CD4-positive, alpha-beta T cell (primary cell): ENCODE measurements at regions of chr15 and their contacts with region 1.

Region 1: GRCh38 chr15:36905908-36906307 is 194.4 kb downstream of the MEIS2 start:
- DNase-seq: no peak
- ATAC-seq: no peak
- H3K4me3 ChIP-seq: no peak overlapping the region
- H3K4me3 Mint-ChIP-seq: no peak overlapping the region
- H3K27ac ChIP-seq: no peak overlapping the region
- H3K27ac Mint-ChIP-seq: no peak overlapping the region
- H3K4me1 ChIP-seq: no peaks in the 10 kb centered on the region
- H3K4me1 Mint-ChIP-seq: no peaks in the 10 kb centered on the region
- H3K27me3 ChIP-seq: no peaks in the 10 kb centered on the region
- H3K27me3 Mint-ChIP-seq: peaks cover 15% of the 10 kb centered on the region
- CTCF ChIP-seq: no peak

Region 2: DNA sequence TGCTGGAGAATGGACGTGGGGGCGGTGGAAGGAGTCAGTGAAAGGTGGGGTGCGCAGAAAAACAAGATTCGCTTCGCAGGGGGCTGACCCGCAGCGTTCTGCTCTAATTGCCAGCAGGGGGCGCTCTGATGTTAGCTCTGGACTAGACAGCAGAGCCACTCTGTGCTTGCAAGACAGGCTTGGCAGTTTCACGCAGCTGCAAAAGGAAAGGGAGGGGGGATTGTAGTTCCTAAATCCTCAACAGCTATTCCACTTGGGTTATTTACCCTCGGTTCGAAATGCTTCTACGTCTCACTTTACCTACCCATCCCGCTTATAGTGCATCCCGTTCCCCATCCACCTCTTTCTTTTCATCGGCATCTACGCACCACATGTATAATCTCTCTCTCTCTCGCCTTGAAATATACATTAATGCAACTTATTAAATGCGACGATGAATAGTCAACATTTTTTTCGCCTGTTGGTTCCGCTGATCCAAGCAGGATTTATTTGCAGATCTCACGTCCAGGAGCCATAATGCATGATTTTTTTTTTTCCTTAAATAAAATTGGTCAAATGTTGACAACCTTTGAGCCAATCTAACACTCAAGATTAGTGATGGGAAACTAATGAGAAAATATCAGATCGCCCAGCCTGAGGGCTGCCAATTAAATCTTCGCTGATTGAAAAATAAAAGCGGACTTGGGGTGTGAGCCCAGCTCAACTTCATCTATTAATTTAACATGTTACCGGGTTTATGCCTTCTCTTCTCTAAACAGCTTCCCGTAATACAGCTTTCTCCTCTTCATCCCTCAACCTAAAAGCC is 22.0 kb before region 1 on chr15:
- CTCF ChIA-PET with region 1: no interaction called
- POLR2A ChIA-PET with region 1: no interaction called
- intact Hi-C with region 1: loop called in 1 of 2 experiments (anchors 1 kb)
- DNase-seq: peak in 11 of 14 experiments; percentile 5 to 62 (median 28)
- ATAC-seq: no peak
- H3K4me3 ChIP-seq: no peak overlapping the region
- H3K4me3 Mint-ChIP-seq: no peak overlapping the region
- H3K27ac ChIP-seq: no peak overlapping the region
- H3K27ac Mint-ChIP-seq: no peak overlapping the region
- H3K4me1 ChIP-seq: peaks cover 4% of the 10 kb centered on the region
- H3K4me1 Mint-ChIP-seq: peaks cover 13% of the 10 kb centered on the region
- H3K27me3 ChIP-seq: peaks cover 84 to 99% of the 10 kb centered on the region in 2 experiments
- H3K27me3 Mint-ChIP-seq: peaks cover 96% of the 10 kb centered on the region
- CTCF ChIP-seq: no peak

Region 3: DNA sequence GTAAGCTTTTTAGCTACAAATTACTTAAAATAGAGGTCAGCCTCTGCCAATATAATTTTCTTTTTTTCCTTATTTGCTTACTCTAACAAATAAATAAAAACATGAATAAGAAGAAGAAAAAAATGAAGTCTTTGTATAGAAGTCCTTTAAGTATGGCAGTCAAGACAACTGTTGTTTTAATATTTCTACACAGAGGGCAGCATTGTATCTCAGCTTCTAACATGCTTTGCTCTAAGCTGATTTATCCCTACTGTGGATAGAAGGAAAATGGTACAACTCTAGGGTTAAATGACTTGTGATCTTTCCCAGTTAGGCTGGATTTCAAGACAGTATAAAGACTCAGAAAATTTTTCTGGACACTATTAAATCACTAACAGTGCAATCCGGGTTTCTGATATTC is 298.8 kb after region 1 on chr15:
- CTCF ChIA-PET with region 1: no interaction called
- POLR2A ChIA-PET with region 1: no interaction called
- intact Hi-C with region 1: no loop called
- DNase-seq: no peak
- ATAC-seq: no peak
- H3K4me3 ChIP-seq: no peak overlapping the region
- H3K4me3 Mint-ChIP-seq: no peak overlapping the region
- H3K27ac ChIP-seq: no peak overlapping the region
- H3K27ac Mint-ChIP-seq: no peak overlapping the region
- H3K4me1 ChIP-seq: no peaks in the 10 kb centered on the region
- H3K4me1 Mint-ChIP-seq: no peaks in the 10 kb centered on the region
- H3K27me3 ChIP-seq: no peaks in the 10 kb centered on the region
- H3K27me3 Mint-ChIP-seq: no peaks in the 10 kb centered on the region
- CTCF ChIP-seq: no peak